Activated T-helper 1 cell treated with anti-CD3 and anti-CD28 coated beads, Interleukin-12 subunit alpha, Interleukin-12 subunit beta, Interleukin-2, Interleukin-4 antibody, amounts not matched to agents 30 ng/mL and 10 ng/mL and 1 ng/mL, durations not matched to agents 14 hours and 24 hours and 36 hours (primary cell): ENCODE measurements at regions of chr2 and their contacts with region 1.

Region 1: GRCh38 chr2:38129987-38130386 is 54.0 kb upstream of the CYP1B1 start:
- DNase-seq: no peak
- H3K4me3 Mint-ChIP-seq: no peak overlapping the region
- H3K27ac Mint-ChIP-seq: no peak overlapping the region
- H3K4me1 Mint-ChIP-seq: peaks cover 4% of the 10 kb centered on the region
- H3K27me3 Mint-ChIP-seq: no peaks in the 10 kb centered on the region

Region 2: DNA sequence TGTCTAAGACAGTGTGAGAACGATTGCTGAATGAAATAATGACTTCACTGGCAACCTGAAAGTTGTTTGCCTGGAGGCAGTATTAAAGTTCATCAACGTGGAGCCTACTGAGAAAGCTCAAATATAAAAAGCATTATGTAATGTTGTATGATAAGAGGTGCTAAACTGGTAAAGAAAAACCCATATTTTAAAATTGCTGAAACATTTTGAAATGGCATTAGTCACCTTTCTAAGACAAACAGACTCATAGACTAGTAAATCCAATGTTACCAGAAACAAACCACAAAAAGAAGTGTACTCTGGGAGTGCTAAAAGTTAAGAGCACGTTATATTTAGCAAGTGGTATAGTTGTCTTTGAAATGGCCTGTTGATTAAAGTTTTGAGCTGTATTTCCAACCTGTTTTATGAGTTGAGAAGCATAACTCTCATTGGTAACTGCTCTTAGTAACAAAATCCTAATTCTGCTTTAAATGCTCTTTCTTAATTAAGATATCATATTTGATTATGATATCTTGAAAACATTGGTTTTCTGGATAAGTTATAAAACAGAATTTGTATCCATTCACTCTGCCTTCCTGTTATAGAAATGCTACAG is 116.7 kb before region 1 on chr2:
- intact Hi-C with region 1: loop called (anchors 5 kb)
- DNase-seq: no peak
- H3K4me3 Mint-ChIP-seq: no peak overlapping the region
- H3K27ac Mint-ChIP-seq: no peak overlapping the region
- H3K4me1 Mint-ChIP-seq: no peaks in the 10 kb centered on the region
- H3K27me3 Mint-ChIP-seq: peaks cover 7% of the 10 kb centered on the region

Region 3: DNA sequence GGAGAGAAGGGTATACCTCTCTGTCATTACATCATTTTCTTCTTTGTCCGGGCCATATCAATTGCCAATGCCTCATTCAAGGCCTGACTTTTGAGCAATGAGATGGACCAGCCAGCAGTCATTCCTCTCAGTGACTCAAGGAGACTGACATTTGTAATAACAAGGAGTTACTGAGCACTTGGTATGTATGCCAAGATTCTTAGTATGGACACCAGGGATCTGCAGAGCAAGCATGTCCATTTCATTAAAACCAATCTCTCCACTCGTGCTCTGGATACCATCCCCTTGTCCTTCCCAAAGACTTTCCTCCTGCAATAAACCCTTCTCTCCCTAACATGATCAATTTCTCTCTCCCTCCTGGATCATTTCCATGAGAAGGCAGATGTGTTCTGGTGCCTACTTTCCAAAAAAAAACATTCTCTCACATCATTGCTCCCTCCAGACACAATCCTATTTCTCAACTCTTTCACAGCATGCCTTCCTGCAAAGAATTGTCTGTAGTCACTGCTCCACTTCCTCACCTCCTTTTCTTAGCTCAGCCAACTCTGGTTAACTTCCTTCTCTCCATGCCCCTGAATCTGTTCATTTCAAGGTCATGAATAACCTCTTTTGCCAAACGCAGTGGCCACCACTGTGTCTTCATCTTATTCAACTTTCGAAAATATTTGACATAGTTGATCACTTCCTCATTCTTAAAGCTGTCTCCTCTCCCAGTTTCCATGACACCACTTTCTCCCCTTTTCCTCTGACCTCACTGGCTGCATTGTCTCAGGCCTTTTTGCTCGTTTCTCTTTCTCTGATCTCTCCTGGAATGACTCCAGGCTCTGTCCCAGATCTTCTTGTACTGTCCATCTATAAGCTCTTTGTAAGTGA is 48.8 kb after region 1 on chr2:
- intact Hi-C with region 1: no loop called
- DNase-seq: no peak
- H3K4me3 Mint-ChIP-seq: no peak overlapping the region
- H3K27ac Mint-ChIP-seq: no peak overlapping the region
- H3K4me1 Mint-ChIP-seq: peaks cover 4% of the 10 kb centered on the region
- H3K27me3 Mint-ChIP-seq: peaks cover 23% of the 10 kb centered on the region

Region 4: DNA sequence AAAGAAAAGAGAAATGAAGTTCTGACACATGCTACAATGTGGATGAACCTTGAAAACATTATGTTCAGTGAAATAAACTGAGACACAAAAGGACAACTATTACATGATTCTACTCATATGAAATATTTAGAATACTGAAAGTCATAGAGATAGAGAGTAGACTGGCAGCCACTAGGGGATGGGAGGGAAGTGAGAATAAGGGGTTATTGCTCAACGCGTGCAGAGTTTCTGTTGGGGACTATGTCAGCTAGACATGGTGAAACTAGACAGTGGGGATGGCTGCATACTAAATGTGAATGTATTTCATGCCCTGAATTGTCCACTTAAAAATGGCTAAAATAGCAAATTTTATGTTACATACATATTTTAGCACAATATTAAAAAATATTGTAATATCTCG is 355.7 kb after region 1 on chr2:
- intact Hi-C with region 1: no loop called
- DNase-seq: no peak
- H3K4me3 Mint-ChIP-seq: no peak overlapping the region
- H3K27ac Mint-ChIP-seq: no peak overlapping the region
- H3K4me1 Mint-ChIP-seq: no peaks in the 10 kb centered on the region
- H3K27me3 Mint-ChIP-seq: peaks cover 4% of the 10 kb centered on the region

Region 5: GRCh38 chr2:38818565-38818964 is 688.6 kb after region 1 on chr2:
- intact Hi-C with region 1: no loop called
- DNase-seq: no peak
- H3K4me3 Mint-ChIP-seq: no peak overlapping the region
- H3K27ac Mint-ChIP-seq: no peak overlapping the region
- H3K4me1 Mint-ChIP-seq: no peaks in the 10 kb centered on the region
- H3K27me3 Mint-ChIP-seq: no peaks in the 10 kb centered on the region